Pancreas (tissue), 10 donors: ENCODE measurements at regions of chr1 and their contacts with region 1.

Region 1: GRCh38 chr1:19921310-19921709 is 2.1 kb downstream of the PLA2G2E start:
- DNase-seq: peak in 1 of 6 donors; percentile 61
- ATAC-seq: peak in 2 of 4 donors; percentile 36 to 48
- H3K4me3 ChIP-seq: no peak overlapping the region
- H3K27ac ChIP-seq: no peak overlapping the region
- H3K4me1 ChIP-seq: no peaks in the 10 kb centered on the region
- H3K27me3 ChIP-seq: no peaks in the 10 kb centered on the region
- CTCF ChIP-seq: no peak

Region 2: DNA sequence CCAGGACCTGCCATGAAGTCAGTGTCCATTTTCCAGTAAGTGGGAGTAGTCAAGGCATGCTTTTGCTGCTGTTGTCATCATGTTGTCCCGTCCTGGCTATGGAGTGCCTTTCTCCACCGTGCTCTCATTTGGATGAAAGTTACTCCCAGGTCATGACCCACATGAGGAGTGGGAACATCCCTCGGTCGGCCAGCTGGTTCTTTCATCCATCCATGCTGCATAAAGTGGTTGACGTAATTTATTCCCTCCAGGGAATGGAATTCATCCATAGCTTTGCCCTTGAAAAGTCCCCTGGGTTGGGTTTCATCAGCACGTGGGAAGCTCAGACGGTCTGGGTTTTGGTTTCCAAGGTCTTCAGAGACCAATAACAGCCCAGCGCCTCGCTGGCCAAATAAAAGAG is 46.5 kb after region 1 on chr1:
- intact Hi-C with region 1: no loop called
- DNase-seq: peak in 1 of 6 donors; percentile 15
- ATAC-seq: peak in 3 of 4 donors; percentile 30 to 71 (median 45)
- H3K4me3 ChIP-seq: no peak overlapping the region
- H3K27ac ChIP-seq: no peak overlapping the region
- H3K4me1 ChIP-seq: no peaks in the 10 kb centered on the region
- H3K27me3 ChIP-seq: no peaks in the 10 kb centered on the region
- CTCF ChIP-seq: no peak

Region 3: GRCh38 chr1:20142001-20142710 is 220.8 kb after region 1 on chr1:
- intact Hi-C with region 1: loop called in 2 of 3 experiments (anchors 5 to 10 kb)
- DNase-seq: peak in 1 of 6 donors; percentile 44
- ATAC-seq: no peak
- H3K4me3 ChIP-seq: no peak overlapping the region
- H3K27ac ChIP-seq: no peak overlapping the region
- H3K4me1 ChIP-seq: no peaks in the 10 kb centered on the region
- H3K27me3 ChIP-seq: no peaks in the 10 kb centered on the region
- CTCF ChIP-seq: no peak

Region 4: DNA sequence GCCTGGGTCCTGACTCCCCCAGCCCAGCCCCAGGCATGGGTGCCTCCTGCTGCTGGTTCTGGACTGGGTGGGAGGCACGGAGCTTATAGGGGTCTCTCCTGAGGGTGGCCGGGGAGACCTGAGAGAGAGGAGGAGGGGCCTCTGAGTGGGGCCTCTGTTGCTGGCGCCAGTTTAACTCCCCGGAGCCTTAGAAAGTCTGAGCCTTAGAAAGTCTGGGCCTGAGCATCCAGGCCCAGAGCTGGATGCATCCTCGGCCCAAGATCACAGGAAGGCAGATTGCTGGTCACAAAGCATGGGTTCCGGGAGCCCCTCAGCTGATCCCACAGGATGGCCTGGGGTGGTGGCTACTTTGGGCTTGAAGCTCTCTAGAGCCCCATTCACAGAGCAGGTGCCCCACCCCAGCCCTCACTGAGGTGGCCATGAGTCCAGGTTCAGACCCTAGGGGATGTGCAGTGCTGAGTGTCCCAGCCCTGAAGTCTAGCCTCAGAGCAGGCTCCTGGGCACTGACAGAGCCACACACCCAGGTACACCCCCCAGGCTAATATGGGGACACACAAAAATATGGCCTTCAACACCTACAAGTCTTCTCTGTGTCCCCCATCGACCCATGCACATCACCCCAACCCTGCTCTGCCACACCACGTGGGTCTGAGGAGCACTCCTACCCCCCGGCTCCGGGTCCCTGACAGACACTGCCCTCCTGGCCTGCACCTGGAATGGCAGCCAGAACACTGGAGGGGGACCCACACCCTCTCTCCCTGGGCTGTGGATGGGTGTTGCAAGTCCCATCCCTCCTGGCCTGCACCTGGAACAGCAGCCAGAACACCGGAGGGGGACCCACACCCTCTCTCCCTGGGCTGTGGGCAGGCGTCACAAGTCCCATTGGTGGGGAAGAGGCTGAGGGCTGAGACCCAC is 227.5 kb after region 1 on chr1:
- intact Hi-C with region 1: loop called in 2 of 3 experiments (anchors 5 to 10 kb)
- DNase-seq: peak in 1 of 6 donors; percentile 50
- ATAC-seq: no peak
- H3K4me3 ChIP-seq: no peak overlapping the region
- H3K27ac ChIP-seq: no peak overlapping the region
- H3K4me1 ChIP-seq: peaks cover 0 to 13% (median 4%) of the 10 kb centered on the region in 3 donors
- H3K27me3 ChIP-seq: no peaks in the 10 kb centered on the region
- CTCF ChIP-seq: no peak

Region 5: DNA sequence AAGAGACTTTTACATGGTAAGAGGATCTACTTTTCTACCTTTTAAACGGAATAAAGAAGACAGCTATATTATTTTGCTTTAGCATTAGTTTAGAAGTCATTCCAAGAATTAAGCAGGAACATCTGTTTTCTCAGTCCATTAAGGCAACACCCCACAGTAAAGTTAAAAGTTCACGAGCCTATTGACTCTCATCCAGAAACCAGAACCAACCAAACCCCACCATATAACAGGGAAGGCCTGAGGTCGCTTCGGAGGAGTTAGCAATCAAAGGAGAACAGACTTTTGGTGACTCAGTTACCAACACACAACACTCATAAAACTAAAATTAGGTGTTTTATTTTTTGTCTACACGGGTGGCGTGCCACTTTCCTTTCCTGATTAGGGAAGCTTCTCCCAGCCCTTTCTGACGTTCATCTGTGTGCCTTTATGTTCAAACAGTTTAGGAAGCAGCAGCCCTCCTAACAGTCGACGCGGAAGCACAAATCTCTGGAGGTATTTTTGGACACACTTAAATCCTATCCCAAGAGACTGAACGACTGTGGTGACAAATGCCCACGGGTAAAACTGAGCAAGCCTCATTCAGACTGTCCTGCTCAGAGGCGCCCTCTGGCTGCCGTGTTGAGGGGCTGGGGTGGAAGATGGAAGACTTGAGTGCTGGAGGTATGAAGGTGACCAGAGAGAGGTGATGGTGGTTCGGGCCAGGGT is 273.6 kb after region 1 on chr1:
- intact Hi-C with region 1: loop called in 2 of 3 experiments (anchors 5 to 10 kb)
- DNase-seq: peak; percentile 43 to 89 (median 70)
- ATAC-seq: peak; percentile 60 to 95 (median 88)
- H3K4me3 ChIP-seq: no peak overlapping the region
- H3K27ac ChIP-seq: no peak overlapping the region
- H3K4me1 ChIP-seq: no peaks in the 10 kb centered on the region
- H3K27me3 ChIP-seq: no peaks in the 10 kb centered on the region
- CTCF ChIP-seq: peak; percentile 61 to 76 (median 69)

Region 6: DNA sequence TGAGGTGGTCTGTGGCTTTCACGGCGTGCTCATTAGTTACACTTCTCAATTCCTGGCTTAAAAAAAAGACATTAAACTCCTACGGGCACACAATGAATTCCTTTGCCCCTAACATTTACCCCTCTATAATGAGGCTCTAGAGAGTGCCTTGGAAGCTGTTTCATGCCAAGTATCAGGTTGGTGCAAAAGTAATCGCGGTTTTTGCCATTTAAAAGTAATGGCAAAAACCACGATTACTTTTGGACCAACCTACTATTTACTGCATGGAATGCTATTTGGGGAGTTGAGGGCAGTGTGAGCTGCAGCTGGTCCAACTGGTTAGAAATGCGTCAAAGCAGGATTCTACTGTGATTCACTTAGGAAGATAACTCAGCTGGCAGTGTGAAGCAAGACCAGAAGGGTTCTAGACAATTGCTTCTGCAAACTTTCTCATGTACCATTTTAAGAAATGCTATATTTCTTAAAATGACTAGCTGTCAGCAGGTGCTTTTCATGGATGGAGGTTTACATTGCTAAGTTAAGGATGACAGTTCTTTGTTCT is 286.2 kb after region 1 on chr1:
- intact Hi-C with region 1: loop called in 1 of 3 experiments (anchors 10 kb)
- DNase-seq: no peak
- ATAC-seq: no peak
- H3K4me3 ChIP-seq: no peak overlapping the region
- H3K27ac ChIP-seq: no peak overlapping the region
- H3K4me1 ChIP-seq: peaks cover 0 to 3% (median 0%) of the 10 kb centered on the region in 3 donors
- H3K27me3 ChIP-seq: no peaks in the 10 kb centered on the region
- CTCF ChIP-seq: no peak

Region 7: GRCh38 chr1:20493839-20494608 is 572.7 kb after region 1 on chr1:
- intact Hi-C with region 1: loop called in 1 of 3 experiments (anchors 10 kb)
- DNase-seq: peak; percentile 63 to 96 (median 84)
- ATAC-seq: peak; percentile 76 to 96 (median 92)
- H3K4me3 ChIP-seq: no peak overlapping the region
- H3K27ac ChIP-seq: no peak overlapping the region
- H3K4me1 ChIP-seq: no peaks in the 10 kb centered on the region
- H3K27me3 ChIP-seq: no peaks in the 10 kb centered on the region
- CTCF ChIP-seq: peak; percentile 93 to 99 (median 95)